ENCODE measurements at regions of chr3 and their contacts with region 1.

Region 1: DNA sequence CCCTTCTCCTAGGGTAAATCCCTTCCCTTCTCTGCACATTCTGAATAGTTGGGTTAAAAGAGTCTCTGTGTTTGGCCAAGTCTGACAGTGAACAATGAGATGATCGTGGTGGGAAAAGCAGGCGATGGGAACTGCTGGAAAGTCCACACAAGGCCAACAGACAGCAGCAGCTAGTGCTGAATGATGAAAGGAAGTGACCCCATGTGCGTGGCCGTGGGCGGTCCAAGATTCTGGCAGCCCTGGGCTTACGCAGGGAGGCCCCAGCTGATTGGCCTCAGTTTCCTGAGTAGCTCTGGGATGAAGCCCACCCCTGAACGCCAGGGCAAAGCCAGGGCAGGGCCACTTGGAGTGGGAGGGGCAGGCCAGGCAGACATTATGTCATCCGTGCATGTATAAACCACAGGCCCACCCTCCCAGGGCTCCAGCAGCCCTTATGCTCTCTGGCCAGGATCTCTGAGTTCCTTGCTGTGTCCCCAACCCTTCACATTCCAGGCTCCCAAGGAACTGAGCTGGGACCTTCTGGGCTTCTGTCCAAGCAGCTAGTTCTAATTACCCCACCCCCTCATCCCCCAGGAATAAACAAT is 57.8 kb downstream of the CDC25A start:
- DNase-seq: no peak
- ATAC-seq: no peak
- H3K4me3 ChIP-seq: no peak overlapping the region
- H3K4me3 Mint-ChIP-seq: no peak overlapping the region
- H3K27ac ChIP-seq: no peak overlapping the region
- H3K27ac Mint-ChIP-seq: no peak overlapping the region
- H3K4me1 ChIP-seq: no peaks in the 10 kb centered on the region
- H3K4me1 Mint-ChIP-seq: peaks cover 0 to under 1% (median 0%) of the 10 kb centered on the region in 7 donors
- H3K27me3 ChIP-seq: no peaks in the 10 kb centered on the region
- H3K27me3 Mint-ChIP-seq: no peaks in the 10 kb centered on the region

Region 2: DNA sequence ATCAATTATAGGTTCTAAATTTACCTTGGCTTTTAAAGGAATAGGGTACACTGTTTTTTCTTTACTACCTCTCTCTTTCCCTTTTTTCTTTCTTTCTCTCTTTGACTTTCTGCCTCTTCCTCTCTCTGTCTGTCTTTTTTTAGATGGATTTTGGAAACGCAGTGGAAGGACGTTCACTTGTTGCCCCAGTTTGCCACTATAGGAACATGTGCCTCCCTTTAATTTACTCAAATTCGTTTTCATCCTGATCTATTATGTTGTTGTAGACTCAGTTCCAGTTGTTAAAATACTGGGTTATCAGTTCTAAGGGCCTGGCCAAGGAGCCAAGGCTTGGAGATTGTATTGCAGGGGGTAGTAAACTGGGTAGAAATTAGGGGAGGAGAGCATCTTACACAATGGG is 204.2 kb after region 1 on chr3:
- CTCF ChIA-PET with region 1: no interaction called
- POLR2A ChIA-PET with region 1: no interaction called
- intact Hi-C with region 1: loop called in 1 of 2 experiments (anchors 5 kb)
- DNase-seq: no peak
- ATAC-seq: no peak
- H3K4me3 ChIP-seq: no peak overlapping the region
- H3K4me3 Mint-ChIP-seq: no peak overlapping the region
- H3K27ac ChIP-seq: no peak overlapping the region
- H3K27ac Mint-ChIP-seq: peak overlapping the region in 1 of 9 donors; percentile 2
- H3K4me1 ChIP-seq: no peaks in the 10 kb centered on the region
- H3K4me1 Mint-ChIP-seq: peaks cover 0 to 7% (median 0%) of the 10 kb centered on the region in 7 donors
- H3K27me3 ChIP-seq: no peaks in the 10 kb centered on the region
- H3K27me3 Mint-ChIP-seq: peaks cover 8 to 26% (median 25%) of the 10 kb centered on the region in 5 donors

Region 3: DNA sequence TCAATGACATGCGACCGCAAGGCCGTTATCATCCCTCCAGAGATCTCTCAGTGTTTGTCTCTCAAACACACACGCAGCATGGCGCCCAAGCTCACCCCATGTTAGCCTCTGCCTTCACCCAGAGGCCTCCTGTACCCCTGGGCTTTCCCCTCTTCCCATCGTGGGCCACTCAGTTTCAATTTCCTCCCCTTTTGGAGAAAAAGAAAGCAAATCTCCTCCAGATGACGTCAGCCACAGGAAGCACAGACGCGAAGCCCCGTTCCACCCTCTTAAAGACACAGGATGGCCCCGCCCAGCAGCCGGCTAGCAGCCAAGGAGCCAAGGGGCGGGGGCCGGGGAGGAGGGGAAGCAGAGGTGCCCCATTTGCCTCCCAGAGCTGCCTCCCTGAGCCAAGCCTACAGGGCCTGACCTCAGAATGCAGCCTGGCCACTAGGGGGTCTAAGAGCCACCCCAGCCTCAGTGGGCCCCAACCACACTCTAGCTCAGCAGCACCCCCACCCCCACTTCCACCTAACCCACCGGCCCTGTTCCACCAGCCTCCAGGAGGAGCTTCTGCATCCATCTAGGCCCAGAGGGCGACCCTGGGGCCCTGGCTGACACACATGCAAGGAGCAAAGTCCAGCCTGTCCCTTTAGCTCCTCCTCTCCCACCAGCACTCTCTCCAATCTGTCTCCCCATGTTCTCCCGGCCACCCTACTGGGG is 342.7 kb after region 1 on chr3:
- CTCF ChIA-PET with region 1: no interaction called
- POLR2A ChIA-PET with region 1: no interaction called
- intact Hi-C with region 1: no loop called
- DNase-seq: peak; percentile 79 to 98 (median 95)
- ATAC-seq: peak; percentile 93
- H3K4me3 ChIP-seq: peak overlapping the region; percentile 92
- H3K4me3 Mint-ChIP-seq: peak overlapping the region; percentile 87 to 100 (median 94)
- H3K27ac ChIP-seq: peak overlapping the region; percentile 95
- H3K27ac Mint-ChIP-seq: peak overlapping the region; percentile 90 to 100 (median 99)
- H3K4me1 ChIP-seq: peaks cover 46 to 54% of the 10 kb centered on the region in 2 donors
- H3K4me1 Mint-ChIP-seq: peaks cover 41 to 75% (median 64%) of the 10 kb centered on the region in 7 donors
- H3K27me3 ChIP-seq: no peaks in the 10 kb centered on the region
- H3K27me3 Mint-ChIP-seq: peaks cover 0 to 2% (median 0%) of the 10 kb centered on the region in 5 donors